Natural killer cell (primary cell): ENCODE measurements at regions of chr16 and their contacts with region 1.

Region 1: GRCh38 chr16:76622876-76623275 is 345.7 kb downstream of the CNTNAP4 start:
- DNase-seq: no peak
- ATAC-seq: no peak
- H3K4me3 ChIP-seq: no peak overlapping the region
- H3K4me3 Mint-ChIP-seq: no peak overlapping the region
- H3K27ac ChIP-seq: no peak overlapping the region
- H3K27ac Mint-ChIP-seq: no peak overlapping the region
- H3K4me1 ChIP-seq: no peaks in the 10 kb centered on the region
- H3K4me1 Mint-ChIP-seq: no peaks in the 10 kb centered on the region
- H3K27me3 ChIP-seq: no peaks in the 10 kb centered on the region
- H3K27me3 Mint-ChIP-seq: no peaks in the 10 kb centered on the region
- CTCF ChIP-seq: no peak

Region 2: DNA sequence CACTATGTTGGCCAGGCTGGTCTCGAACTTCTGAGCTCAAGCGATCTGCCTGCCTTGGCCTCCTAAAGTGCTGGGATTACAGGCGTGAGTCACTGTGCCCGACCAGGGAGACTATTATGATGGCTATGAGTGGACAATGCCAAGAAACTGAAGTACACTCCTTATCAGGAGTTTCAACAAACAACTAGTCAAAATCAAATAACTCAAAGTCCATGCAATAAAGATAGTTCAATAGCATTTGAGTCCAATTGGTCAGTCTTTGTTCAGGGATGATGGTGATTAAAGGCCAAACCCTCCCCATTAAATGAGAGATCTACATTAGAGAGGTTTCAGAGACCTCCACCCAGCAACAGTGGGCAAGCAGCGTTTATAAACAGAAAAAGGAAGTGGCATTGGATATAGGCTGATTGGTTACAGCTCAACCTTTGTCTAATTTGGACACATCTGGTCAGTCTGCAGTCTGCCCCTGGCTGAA is 1095.0 kb before region 1 on chr16:
- intact Hi-C with region 1: no loop called
- DNase-seq: no peak
- ATAC-seq: no peak
- H3K4me3 ChIP-seq: no peak overlapping the region
- H3K4me3 Mint-ChIP-seq: no peak overlapping the region
- H3K27ac ChIP-seq: no peak overlapping the region
- H3K27ac Mint-ChIP-seq: no peak overlapping the region
- H3K4me1 ChIP-seq: no peaks in the 10 kb centered on the region
- H3K4me1 Mint-ChIP-seq: no peaks in the 10 kb centered on the region
- H3K27me3 ChIP-seq: no peaks in the 10 kb centered on the region
- H3K27me3 Mint-ChIP-seq: no peaks in the 10 kb centered on the region
- CTCF ChIP-seq: no peak

Region 3: GRCh38 chr16:76639685-76640289 is 16.9 kb after region 1 on chr16:
- intact Hi-C with region 1: loop called (anchors 1 kb)
- DNase-seq: no peak
- ATAC-seq: no peak
- H3K4me3 ChIP-seq: no peak overlapping the region
- H3K4me3 Mint-ChIP-seq: no peak overlapping the region
- H3K27ac ChIP-seq: no peak overlapping the region
- H3K27ac Mint-ChIP-seq: no peak overlapping the region
- H3K4me1 ChIP-seq: no peaks in the 10 kb centered on the region
- H3K4me1 Mint-ChIP-seq: no peaks in the 10 kb centered on the region
- H3K27me3 ChIP-seq: no peaks in the 10 kb centered on the region
- H3K27me3 Mint-ChIP-seq: no peaks in the 10 kb centered on the region
- CTCF ChIP-seq: no peak

Region 4: DNA sequence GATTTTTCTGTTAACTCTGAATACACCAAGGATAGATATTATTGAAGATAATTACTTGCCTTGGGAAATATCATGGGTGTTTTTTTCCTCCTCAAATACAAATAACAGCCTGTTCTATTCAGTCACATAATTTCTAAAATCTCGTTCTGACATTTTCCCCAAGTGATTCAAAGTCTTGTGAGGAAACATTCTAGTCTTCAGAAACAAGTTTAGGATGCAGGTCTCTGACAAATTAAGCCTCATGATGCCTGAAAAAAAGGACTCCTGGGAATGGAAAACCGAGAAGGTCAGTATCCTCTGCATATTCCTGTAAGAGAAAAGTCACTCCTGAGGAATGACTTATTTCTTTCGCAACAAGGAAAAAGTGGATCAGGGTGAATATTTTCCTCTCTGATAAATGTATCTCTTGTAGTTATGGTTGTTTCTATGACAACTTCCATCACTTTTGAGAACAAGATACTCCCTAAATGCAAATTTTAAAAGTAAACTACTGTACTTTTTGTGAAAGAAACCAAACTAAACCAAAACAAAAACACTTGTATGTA is 38.9 kb after region 1 on chr16:
- intact Hi-C with region 1: no loop called
- DNase-seq: no peak
- ATAC-seq: no peak
- H3K4me3 ChIP-seq: no peak overlapping the region
- H3K4me3 Mint-ChIP-seq: no peak overlapping the region
- H3K27ac ChIP-seq: no peak overlapping the region
- H3K27ac Mint-ChIP-seq: no peak overlapping the region
- H3K4me1 ChIP-seq: no peaks in the 10 kb centered on the region
- H3K4me1 Mint-ChIP-seq: no peaks in the 10 kb centered on the region
- H3K27me3 ChIP-seq: no peaks in the 10 kb centered on the region
- H3K27me3 Mint-ChIP-seq: no peaks in the 10 kb centered on the region
- CTCF ChIP-seq: no peak